HepG2 (cell line): ENCODE measurements at regions of chr4 and their contacts with region 1.

Region 1: GRCh38 chr4:15479089-15479912 is 9.6 kb downstream of the CC2D2A start:
- DNase-seq: peak; percentile 77
- ATAC-seq: peak; percentile 93
- H3K4me3 ChIP-seq: peak overlapping the region; percentile 67 to 76 (median 73)
- H3K27ac ChIP-seq: peak overlapping the region; percentile 59
- H3K4me1 ChIP-seq: peaks cover 12% of the 10 kb centered on the region
- H3K27me3 ChIP-seq: no peaks in the 10 kb centered on the region
- CTCF ChIP-seq: peak; percentile 86
- EP300 ChIP-seq: no peak; a peak in 1 of 4 replicates
- POLR2A ChIP-seq: peak; percentile 54 to 59; a peak in 3 of 4 replicates
- RAD21 ChIP-seq: peak; percentile 84

Region 2: DNA sequence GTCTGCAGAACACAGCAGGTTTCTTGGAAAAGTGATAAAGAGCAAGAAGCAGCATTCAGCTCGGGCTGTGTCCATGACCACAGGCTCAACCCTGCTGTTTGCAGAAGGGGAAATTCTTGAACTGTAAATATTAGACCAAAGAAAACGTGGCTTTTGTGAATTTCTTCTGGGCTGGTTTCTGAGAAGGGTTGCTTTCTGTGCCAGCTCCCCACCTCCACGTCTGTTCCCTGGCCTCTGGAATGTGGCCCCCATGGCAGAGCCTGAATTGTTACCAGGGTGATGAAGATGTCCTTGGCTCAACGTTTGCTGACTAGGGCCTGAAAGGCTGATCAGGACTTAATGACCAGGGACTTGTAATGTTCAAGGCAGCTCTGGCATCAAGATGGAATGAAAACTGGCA is 361.0 kb before region 1 on chr4:
- CTCF ChIA-PET with region 1: no interaction called
- POLR2A ChIA-PET with region 1: no interaction called
- in situ Hi-C with region 1: no loop called
- intact Hi-C with region 1: no loop called
- DNase-seq: peak; percentile 62
- ATAC-seq: peak; percentile 96
- H3K4me3 ChIP-seq: peak overlapping the region in 1 of 3 experiments; percentile 17; a peak in 1 of 6 replicates
- H3K27ac ChIP-seq: peak overlapping the region; percentile 23
- H3K4me1 ChIP-seq: peaks cover 25% of the 10 kb centered on the region
- H3K27me3 ChIP-seq: no peaks in the 10 kb centered on the region
- CTCF ChIP-seq: no peak
- EP300 ChIP-seq: peak in 1 of 2 experiments; percentile 57; a peak in 1 of 4 replicates
- POLR2A ChIP-seq: no peak
- RAD21 ChIP-seq: no peak

Region 3: GRCh38 chr4:15649914-15650545 is 170.7 kb after region 1 on chr4:
- CTCF ChIA-PET with region 1: interaction called, 18 read pairs
- POLR2A ChIA-PET with region 1: interaction called, 5 read pairs
- in situ Hi-C with region 1: loop called (anchors 5 kb)
- intact Hi-C with region 1: loop called (anchors 1 kb)
- DNase-seq: peak; percentile 59
- ATAC-seq: peak; percentile 60
- H3K4me3 ChIP-seq: no peak overlapping the region
- H3K27ac ChIP-seq: no peak overlapping the region
- H3K4me1 ChIP-seq: peaks cover 38% of the 10 kb centered on the region
- H3K27me3 ChIP-seq: no peaks in the 10 kb centered on the region; a peak in 1 of 5 replicates
- CTCF ChIP-seq: peak; percentile 78
- EP300 ChIP-seq: no peak
- POLR2A ChIP-seq: no peak
- RAD21 ChIP-seq: peak; percentile 51

Region 4: GRCh38 chr4:15729910-15730533 is 250.7 kb after region 1 on chr4:
- CTCF ChIA-PET with region 1: no interaction called
- POLR2A ChIA-PET with region 1: no interaction called
- in situ Hi-C with region 1: no loop called
- intact Hi-C with region 1: loop called (anchors 1 kb)
- DNase-seq: peak; percentile 45
- ATAC-seq: peak; percentile 61
- H3K4me3 ChIP-seq: no peak overlapping the region
- H3K27ac ChIP-seq: no peak overlapping the region
- H3K4me1 ChIP-seq: no peaks in the 10 kb centered on the region
- H3K27me3 ChIP-seq: peaks cover 0 to 4% of the 10 kb centered on the region in 2 experiments; a peak in 1 of 5 replicates
- CTCF ChIP-seq: peak; percentile 70
- EP300 ChIP-seq: no peak
- POLR2A ChIP-seq: no peak
- RAD21 ChIP-seq: peak; percentile 24; the same call in 1 of the 2 replicates

Region 5: GRCh38 chr4:15882675-15883086 is 403.4 kb after region 1 on chr4:
- CTCF ChIA-PET with region 1: interaction called, 3 read pairs
- POLR2A ChIA-PET with region 1: no interaction called
- in situ Hi-C with region 1: no loop called
- intact Hi-C with region 1: loop called (anchors 2 kb)
- DNase-seq: peak; percentile 64
- ATAC-seq: peak; percentile 96
- H3K4me3 ChIP-seq: no peak overlapping the region
- H3K27ac ChIP-seq: no peak overlapping the region
- H3K4me1 ChIP-seq: no peaks in the 10 kb centered on the region
- H3K27me3 ChIP-seq: no peaks in the 10 kb centered on the region; a peak in 1 of 5 replicates
- CTCF ChIP-seq: peak; percentile 89
- EP300 ChIP-seq: no peak
- POLR2A ChIP-seq: no peak
- RAD21 ChIP-seq: peak; percentile 54

Region 6: GRCh38 chr4:15963001-15963451 is 483.7 kb after region 1 on chr4 and contains the start of gene FGFBP2:
- CTCF ChIA-PET with region 1: no interaction called
- POLR2A ChIA-PET with region 1: no interaction called
- in situ Hi-C with region 1: loop called (anchors 5 kb)
- intact Hi-C with region 1: no loop called
- DNase-seq: peak; percentile 33
- ATAC-seq: peak; percentile 95
- H3K4me3 ChIP-seq: peak within 1 kb of the TSS in 1 of 3 experiments; percentile 13; a peak in 1 of 6 replicates
- H3K27ac ChIP-seq: no peak within 1 kb of the TSS
- H3K4me1 ChIP-seq: peaks cover 6% of the 10 kb centered on the region; the same call in 1 of the 2 replicates
- H3K27me3 ChIP-seq: peaks cover 0 to 18% of the 10 kb centered on the region in 2 experiments; a peak in 2 of 5 replicates
- CTCF ChIP-seq: peak; percentile 74
- EP300 ChIP-seq: no peak
- POLR2A ChIP-seq: no peak
- RAD21 ChIP-seq: peak; percentile 37; the same call in 1 of the 2 replicates
- total RNA-seq, gene FGFBP2: not detected in 2 replicates

Region 7: GRCh38 chr4:16264798-16265197 is 785.5 kb after region 1 on chr4:
- CTCF ChIA-PET with region 1: no interaction called
- POLR2A ChIA-PET with region 1: no interaction called
- in situ Hi-C with region 1: loop called (anchors 25 kb)
- intact Hi-C with region 1: loop called (anchors 10 kb)
- DNase-seq: peak; percentile 36
- ATAC-seq: peak; percentile 68; the same call in 2 of the 3 replicates
- H3K4me3 ChIP-seq: no peak overlapping the region
- H3K27ac ChIP-seq: no peak overlapping the region
- H3K4me1 ChIP-seq: no peaks in the 10 kb centered on the region
- H3K27me3 ChIP-seq: no peaks in the 10 kb centered on the region
- CTCF ChIP-seq: peak; percentile 66
- EP300 ChIP-seq: no peak
- POLR2A ChIP-seq: no peak
- RAD21 ChIP-seq: peak; percentile 45; the same call in 1 of the 2 replicates